Pancreas (tissue), 10 donors: ENCODE measurements at regions of chr1 and their contacts with region 1.

Region 1: GRCh38 chr1:89632657-89633247 is at the start of gene LRRC8C:
- DNase-seq: peak; percentile 63 to 92 (median 76)
- ATAC-seq: peak; percentile 91 to 96 (median 94)
- H3K4me3 ChIP-seq: peak within 1 kb of the TSS; percentile 78 to 90 (median 81)
- H3K27ac ChIP-seq: peak within 1 kb of the TSS; percentile 40 to 80 (median 68)
- H3K4me1 ChIP-seq: peaks cover 0 to 8% (median 5%) of the 10 kb centered on the region in 3 donors
- H3K27me3 ChIP-seq: no peaks in the 10 kb centered on the region
- CTCF ChIP-seq: peak in 1 of 4 donors; percentile 24
- total RNA-seq, gene LRRC8C: 0.63 to 3.5 (median 1.1) TPM

Region 2: DNA sequence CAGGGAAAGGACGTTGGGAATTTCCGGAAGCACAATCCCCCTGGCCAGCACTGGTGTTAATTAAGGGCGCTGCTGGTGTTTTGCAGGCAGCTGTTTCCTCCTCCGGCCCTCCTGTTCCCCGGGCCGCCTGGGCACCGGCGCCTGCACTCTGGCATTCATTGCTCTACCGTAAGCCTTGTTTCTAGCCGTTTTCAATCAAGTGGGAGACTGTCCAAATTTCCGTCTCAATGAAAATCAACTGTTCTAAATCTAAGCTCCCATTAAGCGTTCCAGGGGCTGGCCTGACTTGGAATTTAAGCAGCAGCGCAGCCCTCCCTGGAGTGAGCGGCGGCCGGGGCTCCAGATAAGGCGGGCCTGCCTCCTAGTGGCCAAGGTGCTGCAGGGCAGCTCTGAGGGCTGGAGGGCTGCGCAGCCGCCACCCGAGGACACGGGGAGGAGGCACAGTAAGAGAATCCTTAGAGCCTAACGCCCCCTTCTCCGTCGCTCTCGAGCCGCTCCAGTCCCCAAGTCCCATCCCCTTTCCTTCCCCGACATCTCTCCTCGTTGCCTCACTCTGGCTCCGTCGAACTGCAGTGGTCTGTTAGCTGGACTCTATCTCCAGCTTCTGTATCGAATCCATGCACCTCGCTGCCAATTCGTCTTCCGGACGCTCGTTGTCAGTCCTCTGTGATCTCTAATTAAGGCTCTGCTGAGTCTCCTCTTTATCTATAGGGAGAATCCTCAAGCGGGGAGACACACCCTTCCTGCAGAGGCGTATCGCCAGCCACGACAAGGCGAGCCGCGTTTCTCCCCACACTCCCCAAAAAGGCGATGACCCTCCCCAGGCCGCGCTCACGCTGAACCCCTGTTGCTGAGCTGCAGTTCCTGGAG is 130.3 kb after region 1 on chr1:
- intact Hi-C with region 1: loop called in 1 of 3 experiments (anchors 10 kb)
- DNase-seq: peak; percentile 71 to 93 (median 83)
- ATAC-seq: peak; percentile 99
- H3K4me3 ChIP-seq: peak overlapping the region; percentile 13 to 51 (median 20)
- H3K27ac ChIP-seq: peak overlapping the region in 1 of 4 donors; percentile 52
- H3K4me1 ChIP-seq: peaks cover 0 to 5% (median 4%) of the 10 kb centered on the region in 3 donors
- H3K27me3 ChIP-seq: no peaks in the 10 kb centered on the region
- CTCF ChIP-seq: peak; percentile 89 to 99 (median 95)